ENCODE measurements at regions of chr14 and their contacts with region 1.

Region 1: DNA sequence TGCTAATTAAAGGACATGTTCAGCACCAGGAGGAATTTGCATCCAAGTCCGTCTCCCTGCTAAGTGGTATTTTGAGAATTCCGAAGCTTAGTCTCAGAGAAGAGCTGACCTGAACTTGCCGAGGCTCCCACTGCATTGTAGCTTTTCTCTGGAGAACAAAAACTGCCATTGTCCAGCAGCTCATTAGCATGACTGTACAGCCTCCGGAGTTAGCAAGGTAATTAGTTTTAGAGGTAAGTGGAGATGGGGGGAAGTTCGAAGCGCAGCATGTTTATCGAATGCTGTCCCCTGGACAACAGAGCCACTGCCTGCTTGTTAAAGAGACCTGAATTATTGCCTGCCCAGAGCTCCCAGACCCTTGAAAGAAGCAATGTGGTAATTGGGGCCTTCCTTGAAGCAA is 160.3 kb upstream of the PELI2 start:
- DNase-seq: no peak
- H3K4me3 Mint-ChIP-seq: no peak overlapping the region
- H3K27ac Mint-ChIP-seq: no peak overlapping the region
- H3K4me1 Mint-ChIP-seq: no peaks in the 10 kb centered on the region
- H3K27me3 Mint-ChIP-seq: no peaks in the 10 kb centered on the region
- CTCF ChIP-seq: no peak

Region 2: GRCh38 chr14:55968741-55969140 is 10.8 kb after region 1 on chr14:
- CTCF ChIA-PET with region 1: interaction called, 10 read pairs
- POLR2A ChIA-PET with region 1: interaction called, 4 read pairs
- intact Hi-C with region 1: no loop called
- DNase-seq: peak; percentile 5
- H3K4me3 Mint-ChIP-seq: no peak overlapping the region
- H3K27ac Mint-ChIP-seq: no peak overlapping the region
- H3K4me1 Mint-ChIP-seq: no peaks in the 10 kb centered on the region
- H3K27me3 Mint-ChIP-seq: no peaks in the 10 kb centered on the region
- CTCF ChIP-seq: no peak